GM10248 (cell line): ENCODE measurements at regions of chr19 and their contacts with region 1.

Region 1: DNA sequence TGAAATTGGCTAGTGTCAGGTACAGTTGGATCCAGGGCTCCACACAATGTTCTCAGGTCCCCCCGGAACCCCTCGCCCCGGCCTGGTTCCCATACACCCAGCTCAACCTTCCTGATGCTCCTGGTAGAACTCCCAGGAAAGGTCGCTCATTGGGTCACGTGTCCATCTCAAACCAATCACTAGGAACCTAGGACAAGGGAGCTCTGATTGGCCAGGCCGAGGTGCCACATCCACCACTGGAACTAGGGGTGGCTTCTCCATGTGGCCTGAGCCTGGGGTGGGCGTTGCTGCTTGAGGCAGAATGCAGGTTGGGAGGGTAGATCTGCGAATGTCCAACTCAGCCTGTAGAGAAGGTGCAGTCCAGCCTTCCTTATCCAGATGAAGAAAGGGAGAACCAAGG is 6.9 kb upstream of the MEF2B start:
- DNase-seq: no peak
- CTCF ChIP-seq: no peak

Region 2: GRCh38 chr19:19053508-19054314 is 123.2 kb before region 1 on chr19:
- CTCF ChIA-PET with region 1: interaction called, 21 read pairs
- POLR2A ChIA-PET with region 1: no interaction called
- DNase-seq: peak; percentile 71
- CTCF ChIP-seq: peak; percentile 51

Region 3: DNA sequence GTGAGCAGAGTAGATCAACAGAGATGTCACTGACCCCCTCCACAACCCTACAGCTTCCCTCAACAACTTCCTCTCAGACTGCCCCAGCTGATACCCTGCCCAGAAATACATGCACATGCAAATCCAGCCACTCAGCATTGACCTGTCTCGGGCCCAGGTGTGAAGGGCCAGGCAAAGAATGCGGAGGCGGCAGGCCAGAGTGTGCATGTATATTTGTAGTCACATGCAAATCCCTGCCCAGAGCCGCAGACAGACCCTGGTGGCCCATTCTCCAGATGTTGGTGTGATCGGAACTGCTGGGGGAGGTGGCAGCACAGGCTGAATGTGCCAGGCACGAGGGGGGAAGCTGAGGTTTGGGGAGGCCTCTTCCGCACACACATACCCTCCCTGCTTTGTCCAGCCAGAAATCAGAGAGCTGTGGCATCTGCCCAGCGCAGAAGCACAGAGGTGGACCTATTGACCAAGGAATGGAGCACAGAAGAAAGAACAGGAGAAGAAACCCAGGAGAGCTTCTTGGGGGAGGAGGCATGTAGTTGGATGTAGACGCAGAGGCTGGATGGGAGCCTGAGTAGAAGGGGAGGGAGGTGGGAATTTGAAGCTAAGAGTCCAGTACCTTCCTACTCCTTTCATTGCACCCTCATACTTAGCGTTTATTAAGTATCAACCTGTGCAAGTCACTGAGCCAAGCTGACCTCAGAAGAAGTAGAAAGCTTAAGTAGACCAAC is 21.3 kb before region 1 on chr19:
- CTCF ChIA-PET with region 1: interaction called, 302 read pairs
- POLR2A ChIA-PET with region 1: no interaction called
- DNase-seq: peak; percentile 77
- CTCF ChIP-seq: no peak

Region 4: GRCh38 chr19:19192078-19192882 is 15.3 kb after region 1 on chr19 and contains the starts of genes BORCS8 and RFXANK:
- CTCF ChIA-PET with region 1: interaction called, 20 read pairs
- POLR2A ChIA-PET with region 1: interaction called, 4 read pairs
- DNase-seq: peak; percentile 98
- CTCF ChIP-seq: no peak

Region 5: DNA sequence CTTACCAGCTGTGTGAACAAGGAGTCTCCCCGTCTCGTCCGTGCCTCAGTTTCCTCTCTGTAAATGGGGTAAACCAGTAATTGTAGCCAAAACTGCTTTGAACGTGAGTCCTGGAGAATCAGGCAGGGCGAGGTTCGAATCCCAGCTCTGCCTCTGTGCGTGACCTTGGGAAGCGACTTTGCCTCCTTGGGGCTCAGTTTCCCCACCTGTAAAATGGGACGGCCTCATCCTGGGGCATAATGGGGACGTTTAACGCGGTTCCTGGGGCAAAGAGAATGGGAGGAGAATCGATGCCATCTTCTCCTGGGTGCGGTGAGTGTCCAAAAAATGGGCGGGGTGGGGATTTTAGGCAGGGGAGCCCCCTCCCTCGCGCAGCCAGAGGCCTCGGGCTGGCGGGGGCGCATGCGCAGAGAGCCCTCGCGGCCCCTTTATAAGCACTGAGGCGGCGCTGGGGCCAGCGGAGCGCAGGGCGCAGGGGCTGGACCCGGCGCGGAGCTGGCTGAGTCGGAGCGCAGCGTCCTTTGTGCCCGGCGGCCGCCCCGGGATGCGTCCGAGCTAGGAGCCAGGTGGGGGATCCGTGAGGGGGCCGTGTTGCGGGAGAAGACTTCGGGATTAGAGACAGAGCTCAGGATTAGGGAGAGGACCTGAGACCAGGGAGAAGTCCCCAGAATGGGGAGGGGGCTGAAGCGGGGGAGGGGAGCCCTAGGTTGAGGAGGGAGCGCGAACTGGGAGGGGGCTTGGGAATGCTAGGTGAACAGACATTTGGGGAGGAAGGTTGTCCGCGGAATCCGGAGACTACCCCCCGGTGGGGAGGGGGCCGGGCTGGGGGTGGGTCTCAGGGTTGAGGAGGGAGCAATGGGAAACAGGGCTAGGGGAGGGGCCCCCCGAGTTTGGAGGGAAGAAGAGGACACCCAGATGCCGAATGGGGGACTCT is 34.8 kb after region 1 on chr19 and contains the start of gene NCAN:
- CTCF ChIA-PET with region 1: no interaction called
- POLR2A ChIA-PET with region 1: no interaction called
- DNase-seq: no peak
- CTCF ChIP-seq: no peak

Region 6: GRCh38 chr19:19388568-19389470 is 211.9 kb after region 1 on chr19:
- CTCF ChIA-PET with region 1: no interaction called
- POLR2A ChIA-PET with region 1: no interaction called
- DNase-seq: no peak
- CTCF ChIP-seq: no peak